ENCODE measurements at regions of chr12 and their contacts with region 1.

Region 1: GRCh38 chr12:53159195-53159839 is 21.2 kb upstream of the ZNF740 start:
- DNase-seq: peak; percentile 91 to 96
- ATAC-seq: peak; percentile 90
- H3K4me3 ChIP-seq: no peak overlapping the region
- H3K27ac ChIP-seq: peak overlapping the region in 1 of 2 donors; percentile 76
- H3K4me1 ChIP-seq: no peaks in the 10 kb centered on the region
- H3K27me3 ChIP-seq: no peaks in the 10 kb centered on the region

Region 2: DNA sequence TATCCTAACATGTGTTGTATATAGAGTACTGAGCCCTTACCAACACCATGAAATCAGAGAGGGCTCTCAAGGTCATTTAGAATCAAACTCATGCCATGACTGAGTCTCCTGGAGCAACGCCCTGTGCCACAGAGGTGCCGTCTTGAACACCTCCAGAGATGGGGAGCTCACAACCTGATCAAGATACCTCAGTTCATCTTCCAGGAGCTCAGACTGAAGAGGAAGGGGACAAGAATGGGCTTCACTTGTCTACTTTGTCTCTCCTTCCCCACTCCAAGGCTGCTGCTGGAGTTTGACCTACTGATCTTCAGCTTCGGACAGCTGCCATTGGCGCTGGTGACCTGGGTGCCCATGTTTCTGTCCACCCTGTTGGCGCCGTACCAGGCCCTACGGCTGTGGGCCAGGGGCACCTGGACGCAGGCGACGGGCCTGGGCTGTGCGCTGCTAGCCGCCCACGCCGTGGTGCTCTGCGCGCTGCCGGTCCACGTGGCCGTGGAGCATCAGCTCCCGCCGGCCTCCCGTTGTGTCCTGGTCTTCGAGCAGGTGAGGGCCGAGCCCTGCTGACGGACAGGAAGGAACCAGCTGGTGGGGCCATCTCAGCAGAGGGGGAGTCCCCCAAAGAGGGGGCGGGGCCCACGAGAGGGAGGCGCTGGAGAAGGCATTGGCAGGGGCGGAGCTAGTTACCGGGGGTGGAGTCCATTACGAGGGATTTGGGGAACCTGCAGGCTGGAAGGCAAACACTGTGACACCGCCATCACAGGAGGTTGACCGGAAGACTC is 44.0 kb before region 1 on chr12:
- intact Hi-C with region 1: loop called (anchors 5 kb)
- DNase-seq: no peak
- ATAC-seq: peak; percentile 62
- H3K4me3 ChIP-seq: no peak overlapping the region
- H3K27ac ChIP-seq: peak overlapping the region; percentile 73 to 99
- H3K4me1 ChIP-seq: no peaks in the 10 kb centered on the region
- H3K27me3 ChIP-seq: no peaks in the 10 kb centered on the region

Region 3: GRCh38 chr12:53190108-53190729 is 30.9 kb after region 1 on chr12:
- intact Hi-C with region 1: loop called (anchors 5 kb)
- DNase-seq: peak; percentile 77 to 91
- ATAC-seq: peak; percentile 81
- H3K4me3 ChIP-seq: no peak overlapping the region
- H3K27ac ChIP-seq: no peak overlapping the region
- H3K4me1 ChIP-seq: no peaks in the 10 kb centered on the region
- H3K27me3 ChIP-seq: no peaks in the 10 kb centered on the region

Region 4: DNA sequence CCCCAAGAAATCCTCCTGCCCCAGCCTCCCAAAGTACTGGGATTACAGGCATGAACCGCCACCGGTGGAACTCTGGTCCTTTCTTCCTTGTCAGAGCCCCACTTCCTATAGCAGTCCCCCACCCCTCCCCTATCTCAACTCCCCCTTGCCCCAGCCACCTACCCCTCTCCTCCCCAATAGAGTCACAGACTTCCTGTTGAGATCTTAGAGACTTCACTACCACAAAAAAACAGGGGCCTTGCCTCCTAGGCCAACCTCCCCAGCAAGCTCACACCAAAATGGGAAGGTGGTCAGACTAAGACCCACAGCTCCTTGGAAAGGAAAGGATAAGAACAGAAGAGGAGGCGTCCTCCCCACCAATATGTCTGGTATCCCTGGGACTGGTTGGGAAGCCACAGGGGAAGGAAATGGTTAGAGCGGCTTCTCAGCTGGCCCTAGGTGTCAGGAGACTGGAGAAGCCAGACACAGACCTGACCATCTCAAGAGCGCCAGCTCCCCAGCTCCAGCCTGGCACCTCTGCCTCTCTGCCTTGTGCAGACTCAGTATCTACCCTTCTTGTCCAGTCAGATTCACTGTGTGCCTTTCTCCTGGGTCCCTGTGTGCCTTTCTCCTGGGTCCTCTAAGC is 39.3 kb after region 1 on chr12:
- intact Hi-C with region 1: loop called (anchors 5 kb)
- DNase-seq: peak in 1 of 2 donors; percentile 37
- ATAC-seq: no peak
- H3K4me3 ChIP-seq: no peak overlapping the region
- H3K27ac ChIP-seq: no peak overlapping the region
- H3K4me1 ChIP-seq: no peaks in the 10 kb centered on the region
- H3K27me3 ChIP-seq: no peaks in the 10 kb centered on the region